GM10248 (cell line): ENCODE measurements at regions of chr11 and their contacts with region 1.

Region 1: GRCh38 chr11:2400069-2400760 is at the start of gene TSSC4:
- DNase-seq: peak; percentile 99
- CTCF ChIP-seq: peak; percentile 99

Region 2: GRCh38 chr11:2249189-2249916 is 150.9 kb before region 1 on chr11:
- CTCF ChIA-PET with region 1: no interaction called
- POLR2A ChIA-PET with region 1: no interaction called
- DNase-seq: no peak
- CTCF ChIP-seq: no peak

Region 3: DNA sequence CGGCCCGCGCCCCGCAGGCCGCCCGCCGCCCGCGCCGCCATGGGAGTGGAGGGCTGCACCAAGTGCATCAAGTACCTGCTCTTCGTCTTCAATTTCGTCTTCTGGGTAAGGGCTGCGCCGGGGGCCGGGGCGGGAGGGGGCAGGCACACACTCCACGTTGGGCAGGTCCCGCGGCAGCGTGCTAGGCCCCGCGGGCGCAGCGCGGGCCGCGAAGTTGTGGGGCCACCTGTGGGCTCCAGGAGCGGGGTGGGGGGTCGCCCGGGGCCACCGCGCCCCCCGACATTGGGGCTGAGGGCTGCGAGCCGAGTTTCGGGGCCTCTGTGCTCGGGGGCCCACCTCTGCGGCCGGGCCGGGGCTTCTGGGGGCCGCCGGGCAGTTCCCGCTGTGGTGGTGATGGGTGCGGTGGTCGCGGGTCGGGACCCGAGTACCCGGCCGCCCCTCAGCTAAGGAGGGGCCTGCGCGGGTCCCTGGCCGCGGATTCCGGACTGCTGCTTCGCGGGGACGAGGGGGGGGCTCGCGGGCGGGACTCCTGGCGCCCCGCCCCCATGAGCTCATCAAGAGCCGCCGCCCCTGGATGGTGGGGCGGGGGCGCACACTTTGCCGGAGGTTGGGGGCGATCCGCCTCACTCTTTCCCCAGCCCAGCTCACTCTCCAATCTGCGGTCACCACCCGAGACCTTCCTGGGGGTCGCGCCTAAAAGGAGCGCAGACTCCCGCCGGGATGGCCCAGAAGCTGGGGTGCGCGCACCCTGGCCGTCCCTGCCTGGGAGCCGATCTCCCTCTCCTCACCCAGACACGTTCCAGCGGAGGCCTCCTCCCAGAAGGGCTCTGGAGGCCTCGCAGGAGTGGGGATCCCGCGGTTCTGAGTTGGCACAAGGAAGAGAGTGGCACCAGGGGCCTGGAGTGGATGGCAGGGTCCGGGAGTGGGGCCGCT is 22.4 kb before region 1 on chr11:
- CTCF ChIA-PET with region 1: interaction called, 18 read pairs
- POLR2A ChIA-PET with region 1: interaction called, 8 read pairs
- DNase-seq: peak; percentile 81
- CTCF ChIP-seq: no peak

Region 4: DNA sequence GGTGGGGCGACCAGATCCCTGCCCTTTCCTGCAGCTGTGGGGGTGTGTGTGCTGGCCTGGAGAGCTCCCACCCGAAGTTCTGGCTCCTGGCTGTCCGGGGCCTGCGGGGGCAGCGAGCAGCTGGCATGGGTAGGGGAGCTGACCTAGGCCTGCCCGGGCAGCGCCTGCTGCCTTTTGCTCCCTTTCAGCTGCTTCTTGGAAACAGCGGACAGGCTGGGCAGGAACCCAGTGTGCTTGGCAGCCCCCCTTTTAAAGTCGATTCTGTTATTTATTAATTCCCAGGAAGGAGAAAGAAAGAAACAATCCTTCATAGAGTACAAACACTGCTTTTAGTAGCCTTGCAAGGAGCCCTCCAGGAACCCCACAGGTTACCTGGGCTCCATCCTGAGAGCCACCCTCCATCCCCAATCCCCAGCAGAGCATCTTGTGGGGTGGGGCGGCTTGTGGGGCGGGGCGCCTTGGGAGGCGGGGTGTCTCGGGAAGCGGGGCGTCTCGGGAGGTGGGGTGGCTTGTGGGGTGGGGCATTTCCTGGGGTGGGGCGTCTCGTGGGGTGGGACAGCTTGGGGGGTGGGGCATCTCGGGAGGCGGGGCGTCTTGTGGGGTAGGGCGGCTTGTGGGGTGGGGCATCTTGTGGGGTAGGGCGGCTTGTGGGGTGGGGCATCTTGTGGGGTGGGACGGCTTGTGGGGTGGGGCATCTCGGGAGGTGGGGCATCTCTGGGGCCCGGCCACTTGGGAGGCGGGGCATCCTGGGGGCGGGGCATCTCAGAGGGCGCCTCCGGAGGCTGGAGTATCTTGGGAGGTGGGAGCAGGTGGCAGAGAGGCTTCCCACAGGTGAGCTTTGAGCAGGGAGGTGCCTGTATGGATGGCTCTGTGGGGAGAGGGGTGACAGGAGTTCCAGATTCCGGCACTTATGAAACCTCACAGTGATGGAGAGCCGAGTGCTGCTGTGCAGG is 16.1 kb before region 1 on chr11:
- CTCF ChIA-PET with region 1: interaction called, 25 read pairs
- POLR2A ChIA-PET with region 1: interaction called, 5 read pairs
- DNase-seq: peak; percentile 86
- CTCF ChIP-seq: no peak

Region 5: GRCh38 chr11:2420502-2421225 is 20.4 kb after region 1 on chr11:
- CTCF ChIA-PET with region 1: interaction called, 17 read pairs
- POLR2A ChIA-PET with region 1: no interaction called
- DNase-seq: peak; percentile 92
- CTCF ChIP-seq: peak; percentile 96